ENCODE measurements at regions of chr9 and their contacts with region 1.

Region 1: DNA sequence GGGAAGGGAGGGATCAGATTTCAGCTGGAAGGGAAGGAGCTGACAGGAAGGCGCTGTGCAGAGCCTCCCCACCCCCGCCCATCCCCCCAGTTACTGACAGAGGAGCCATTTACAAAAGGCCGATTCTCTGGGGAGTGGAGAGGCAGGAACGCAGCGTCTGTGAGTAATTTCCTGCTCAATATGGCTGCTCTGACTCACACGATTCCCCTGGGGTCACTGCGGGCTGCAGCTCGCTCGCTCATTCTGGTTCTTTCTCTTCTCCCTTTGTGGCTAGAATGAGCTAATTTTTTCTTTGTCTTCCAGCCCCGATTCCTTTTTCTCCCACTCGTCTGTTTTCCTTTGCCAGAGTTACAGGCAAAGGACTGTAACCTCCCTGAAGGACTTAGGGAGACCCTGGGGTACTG is 28.8 kb downstream of the PTPA start:
- DNase-seq: peak; percentile 85
- H3K4me3 Mint-ChIP-seq: peak overlapping the region; percentile 75
- H3K27ac Mint-ChIP-seq: peak overlapping the region; percentile 93
- H3K4me1 Mint-ChIP-seq: peaks cover 44% of the 10 kb centered on the region
- H3K27me3 Mint-ChIP-seq: no peaks in the 10 kb centered on the region

Region 2: DNA sequence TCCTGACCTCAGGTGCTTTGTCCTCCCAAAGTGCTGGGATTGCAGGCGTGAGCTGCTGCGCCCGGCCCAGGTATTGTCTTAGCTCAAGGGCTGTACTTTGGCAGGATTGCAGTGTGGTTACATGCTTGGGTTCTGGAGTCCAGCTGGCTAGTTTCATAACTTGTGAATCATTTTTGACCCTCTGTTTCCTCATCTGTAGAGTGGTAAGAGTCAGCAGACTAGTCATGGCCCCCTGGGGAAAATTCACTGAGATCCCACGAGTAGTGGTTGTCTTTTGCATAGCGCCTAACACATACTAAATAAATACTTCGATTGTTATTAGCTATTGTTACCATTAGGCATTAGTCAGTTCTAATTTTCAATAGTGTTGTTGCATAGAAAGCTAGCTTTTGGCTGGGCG is 14.5 kb before region 1 on chr9:
- CTCF ChIA-PET with region 1: interaction called, 64 read pairs
- POLR2A ChIA-PET with region 1: no interaction called
- DNase-seq: no peak
- H3K4me3 Mint-ChIP-seq: no peak overlapping the region
- H3K27ac Mint-ChIP-seq: no peak overlapping the region
- H3K4me1 Mint-ChIP-seq: no peaks in the 10 kb centered on the region
- H3K27me3 Mint-ChIP-seq: no peaks in the 10 kb centered on the region

Region 3: DNA sequence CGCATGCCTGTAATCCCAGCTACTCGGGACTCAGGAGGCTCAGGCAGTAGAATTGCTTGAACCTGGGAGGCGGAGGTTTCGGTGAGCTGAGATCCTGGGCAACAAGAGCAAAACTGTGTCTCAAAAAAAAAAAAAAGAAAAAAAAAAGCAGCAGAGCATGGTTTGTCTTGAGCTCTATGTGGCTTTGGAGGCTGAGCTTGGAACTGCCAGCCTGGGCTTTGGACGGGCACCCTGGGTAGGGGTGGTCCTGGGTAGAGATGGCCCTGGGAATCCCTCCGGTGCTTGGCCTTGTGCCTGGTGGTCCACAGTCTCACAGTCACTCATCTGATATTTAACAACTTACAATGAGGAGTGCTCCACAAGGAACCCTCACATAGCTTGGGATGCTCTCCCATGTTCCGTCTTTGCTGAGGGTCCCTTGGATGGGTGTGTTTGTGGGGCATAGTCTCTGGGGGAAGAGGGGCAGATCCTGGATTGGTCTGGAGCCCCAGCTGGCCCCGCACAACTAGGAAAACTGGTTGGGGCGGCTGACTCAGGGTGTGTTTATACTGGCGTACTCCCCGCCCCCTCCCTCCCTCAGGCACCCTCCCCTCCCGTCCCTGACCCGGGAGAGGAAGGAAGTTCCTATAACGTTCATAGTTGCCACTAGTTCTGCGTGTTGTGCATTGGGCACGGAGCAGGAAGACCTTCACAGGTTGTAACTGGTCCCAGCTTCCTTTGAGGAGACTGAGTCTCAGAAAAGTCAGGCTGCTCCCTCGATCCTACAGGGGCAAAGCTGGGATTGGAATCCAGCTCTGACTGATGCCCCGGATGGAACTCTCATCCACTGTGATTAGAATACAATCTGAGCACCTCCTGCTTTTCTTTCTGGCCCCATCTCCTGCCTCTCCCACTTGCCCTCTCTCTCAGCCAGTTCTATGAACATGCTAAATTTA is 26.9 kb after region 1 on chr9:
- CTCF ChIA-PET with region 1: interaction called, 11 read pairs
- POLR2A ChIA-PET with region 1: no interaction called
- DNase-seq: peak; percentile 26
- H3K4me3 Mint-ChIP-seq: peak overlapping the region; percentile 40
- H3K27ac Mint-ChIP-seq: peak overlapping the region; percentile 42
- H3K4me1 Mint-ChIP-seq: peaks cover 37% of the 10 kb centered on the region
- H3K27me3 Mint-ChIP-seq: peaks cover 1% of the 10 kb centered on the region

Region 4: DNA sequence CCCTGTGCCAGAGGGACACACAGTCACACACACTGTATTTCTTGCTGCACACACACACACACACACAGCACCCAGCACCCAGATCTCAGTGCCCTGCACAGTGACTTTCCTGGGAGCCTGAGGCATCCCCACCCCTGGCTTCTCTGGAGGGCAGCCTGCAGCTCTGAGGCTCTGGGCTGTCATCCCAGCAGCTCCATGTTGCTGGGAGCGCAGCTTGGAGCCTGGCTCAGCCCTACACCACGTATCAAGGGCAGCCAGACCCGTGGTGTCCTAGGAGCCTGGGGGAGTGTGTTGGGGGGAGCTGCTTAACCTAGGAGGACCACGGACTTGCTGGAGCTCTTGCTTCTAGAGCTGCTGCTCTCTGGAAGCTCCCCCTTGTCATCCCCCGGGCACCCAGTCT is 32.8 kb after region 1 on chr9:
- CTCF ChIA-PET with region 1: interaction called, 18 read pairs
- POLR2A ChIA-PET with region 1: no interaction called
- DNase-seq: no peak
- H3K4me3 Mint-ChIP-seq: no peak overlapping the region
- H3K27ac Mint-ChIP-seq: no peak overlapping the region
- H3K4me1 Mint-ChIP-seq: peaks cover 37% of the 10 kb centered on the region
- H3K27me3 Mint-ChIP-seq: peaks cover 19% of the 10 kb centered on the region

Region 5: DNA sequence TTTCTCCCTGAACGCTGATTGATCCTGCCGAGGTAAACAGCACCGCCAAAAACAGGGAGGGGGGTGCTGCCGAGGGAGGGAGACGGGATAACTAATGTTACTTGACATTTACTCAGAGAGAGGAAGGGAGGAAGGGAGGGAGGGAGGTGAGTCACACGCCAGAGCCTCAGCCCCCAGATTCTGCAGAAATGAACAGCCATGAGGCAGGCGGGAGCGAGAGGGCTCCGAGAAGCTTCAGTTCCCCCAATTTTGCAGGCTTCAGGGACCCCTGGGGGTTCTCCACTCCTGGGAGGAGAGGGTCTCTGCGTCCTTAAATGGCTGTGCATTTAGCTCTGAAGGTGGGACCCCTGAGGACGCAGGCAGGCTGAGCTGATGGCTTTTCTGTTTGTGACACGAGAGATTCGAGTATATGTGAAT is 97.2 kb after region 1 on chr9:
- CTCF ChIA-PET with region 1: no interaction called
- POLR2A ChIA-PET with region 1: no interaction called
- DNase-seq: peak; percentile 36
- H3K4me3 Mint-ChIP-seq: peak overlapping the region; percentile 80
- H3K27ac Mint-ChIP-seq: peak overlapping the region; percentile 92
- H3K4me1 Mint-ChIP-seq: peaks cover 64% of the 10 kb centered on the region
- H3K27me3 Mint-ChIP-seq: no peaks in the 10 kb centered on the region

Region 6: DNA sequence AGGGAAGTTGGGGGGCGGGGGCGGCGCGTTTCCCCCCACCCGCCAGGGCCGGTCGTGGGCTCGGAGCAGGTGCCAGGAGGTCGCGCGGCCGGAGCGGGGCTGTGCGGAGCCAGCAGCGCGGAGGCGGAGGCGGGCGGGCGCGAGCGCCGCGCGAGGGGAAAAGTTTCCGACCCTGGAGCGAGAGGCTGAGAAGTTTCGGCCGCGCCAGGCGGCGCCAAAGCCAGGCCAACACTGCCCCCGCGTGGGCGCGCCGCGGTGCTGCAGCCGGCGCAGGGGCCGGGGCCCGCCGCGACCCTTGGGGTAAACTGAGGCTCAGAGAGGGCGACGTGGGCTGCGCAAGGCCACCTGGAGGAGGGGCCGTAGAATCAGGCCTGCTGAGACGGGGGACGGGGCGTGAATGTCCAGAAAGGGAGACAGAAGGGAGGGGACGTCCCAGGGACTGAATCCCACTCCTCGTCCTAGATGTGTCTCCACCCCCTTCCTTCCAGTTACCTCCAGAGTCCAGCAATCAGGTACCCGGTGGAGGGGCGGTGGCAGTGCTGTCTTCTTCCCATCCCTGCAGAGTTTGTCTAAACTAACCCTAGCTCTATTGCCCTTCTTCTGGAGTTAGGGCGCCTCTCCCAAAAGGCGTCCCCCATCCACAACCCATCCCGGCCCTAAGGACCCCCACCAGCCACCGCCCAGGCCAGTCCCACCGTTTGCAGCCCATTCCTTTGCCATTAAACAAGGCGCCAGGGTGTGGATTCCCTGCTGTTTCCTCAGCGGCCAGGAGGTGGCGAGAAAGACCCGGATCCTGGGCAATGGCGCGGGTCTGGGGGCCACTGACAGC is 470.7 kb after region 1 on chr9:
- CTCF ChIA-PET with region 1: interaction called, 17 read pairs
- POLR2A ChIA-PET with region 1: no interaction called
- DNase-seq: peak; percentile 72
- H3K4me3 Mint-ChIP-seq: peak overlapping the region; percentile 71
- H3K27ac Mint-ChIP-seq: peak overlapping the region; percentile 75
- H3K4me1 Mint-ChIP-seq: peaks cover 42% of the 10 kb centered on the region
- H3K27me3 Mint-ChIP-seq: peaks cover under 1% of the 10 kb centered on the region

Region 7: DNA sequence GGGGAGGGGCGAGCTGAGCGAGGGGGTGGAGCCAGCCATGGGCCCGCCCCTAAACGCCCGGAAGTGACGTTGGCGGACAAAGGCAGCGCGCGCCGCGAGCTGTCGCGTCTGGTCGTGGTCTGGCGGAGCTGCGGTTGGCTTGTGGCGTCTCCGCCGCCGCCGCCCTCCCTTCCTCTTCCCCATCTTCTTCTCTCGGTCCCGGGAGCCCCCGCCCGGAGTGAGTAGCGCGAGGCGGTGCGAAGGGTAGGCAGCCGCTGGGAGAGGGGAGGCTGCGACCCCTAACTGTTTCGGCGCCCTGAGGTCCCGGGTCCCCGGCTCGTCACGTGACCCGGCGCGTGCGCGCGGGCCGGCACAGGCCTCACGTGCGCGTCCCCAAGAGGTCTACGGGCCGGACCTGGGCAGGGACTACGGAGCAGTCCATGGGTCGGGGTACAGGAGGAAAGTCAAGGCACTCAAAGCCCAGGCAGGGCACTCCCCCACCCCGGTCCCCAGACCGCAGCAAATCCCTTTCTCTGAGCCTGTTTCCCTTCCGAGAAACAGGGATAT is 486.2 kb after region 1 on chr9 and contains the start of gene NTMT1:
- CTCF ChIA-PET with region 1: interaction called, 45 read pairs
- POLR2A ChIA-PET with region 1: interaction called, 3 read pairs
- DNase-seq: peak; percentile 88
- H3K4me3 Mint-ChIP-seq: peak within 1 kb of the TSS; percentile 88
- H3K27ac Mint-ChIP-seq: peak within 1 kb of the TSS; percentile 99
- H3K4me1 Mint-ChIP-seq: peaks cover 54% of the 10 kb centered on the region
- H3K27me3 Mint-ChIP-seq: peaks cover 5% of the 10 kb centered on the region
- total RNA-seq, gene NTMT1: 28.5 to 33.9 TPM

Measured in activated CD4-positive, alpha-beta T cell treated with anti-CD3 and anti-CD28 coated beads, Interleukin-2, amount 10 ng/mL, durations not matched to agents 7 days and 5 days (primary cell).